WTC11 (cell line): ENCODE measurements at regions of chr5 and their contacts with region 1.

Region 1: GRCh38 chr5:178461004-178461730 is 129.0 kb downstream of the COL23A1 start:
- DNase-seq: peak; percentile 94
- ATAC-seq: peak; percentile 96
- H3K4me3 Mint-ChIP-seq: no peak overlapping the region
- H3K27ac Mint-ChIP-seq: no peak overlapping the region
- H3K4me1 Mint-ChIP-seq: peaks cover 33% of the 10 kb centered on the region
- H3K27me3 Mint-ChIP-seq: no peaks in the 10 kb centered on the region
- CTCF ChIP-seq: peak; percentile 92

Region 2: GRCh38 chr5:178271726-178272479 is 189.3 kb before region 1 on chr5:
- CTCF ChIA-PET with region 1: no interaction called
- POLR2A ChIA-PET with region 1: no interaction called
- DNase-seq: no peak
- ATAC-seq: no peak
- H3K4me3 Mint-ChIP-seq: no peak overlapping the region
- H3K27ac Mint-ChIP-seq: no peak overlapping the region
- H3K4me1 Mint-ChIP-seq: no peaks in the 10 kb centered on the region
- H3K27me3 Mint-ChIP-seq: peaks cover 4% of the 10 kb centered on the region
- CTCF ChIP-seq: no peak

Region 3: DNA sequence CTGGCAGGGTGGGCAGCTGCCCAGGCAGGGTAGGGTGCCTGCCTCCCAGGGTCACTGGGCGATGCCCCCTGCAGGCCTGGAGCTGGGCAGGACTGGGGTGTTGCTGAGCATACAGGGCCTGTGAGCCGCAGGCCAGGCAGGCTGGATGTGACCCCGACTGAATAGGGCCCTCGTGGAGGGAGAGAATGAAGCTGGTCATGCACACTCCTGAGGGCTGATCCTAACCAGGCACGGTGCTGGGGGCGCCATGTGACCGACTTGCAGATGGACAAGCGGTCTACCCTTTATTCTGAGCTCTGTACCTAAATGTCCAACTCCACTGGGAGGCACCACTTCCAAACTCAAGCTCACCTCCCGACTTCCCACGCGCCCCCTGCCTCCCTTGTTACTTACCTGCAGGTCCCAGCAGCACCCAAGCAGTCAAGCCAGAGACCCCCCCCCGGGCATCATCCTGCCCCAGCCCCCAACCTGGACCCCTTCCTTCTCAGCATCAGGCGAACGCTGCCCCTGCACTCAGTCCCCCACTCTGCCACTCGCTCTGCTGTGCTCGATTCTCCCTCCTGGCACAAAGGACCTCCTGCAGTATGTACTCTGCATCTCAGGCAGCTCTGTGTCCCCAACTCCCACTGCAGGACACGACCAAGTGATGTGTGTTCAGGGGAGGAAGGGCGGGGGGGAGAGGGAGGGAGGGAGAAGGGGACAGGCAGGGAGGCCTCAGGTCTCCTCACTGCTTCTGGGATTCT is 151.7 kb before region 1 on chr5:
- CTCF ChIA-PET with region 1: interaction called, 11 read pairs
- POLR2A ChIA-PET with region 1: no interaction called
- DNase-seq: peak; percentile 11
- ATAC-seq: no peak
- H3K4me3 Mint-ChIP-seq: no peak overlapping the region
- H3K27ac Mint-ChIP-seq: no peak overlapping the region; the same call in 1 of the 2 replicates
- H3K4me1 Mint-ChIP-seq: peaks cover 22% of the 10 kb centered on the region
- H3K27me3 Mint-ChIP-seq: no peaks in the 10 kb centered on the region; the same call in 1 of the 2 replicates
- CTCF ChIP-seq: no peak

Region 4: GRCh38 chr5:178404987-178405386 is 56.2 kb before region 1 on chr5:
- CTCF ChIA-PET with region 1: no interaction called
- POLR2A ChIA-PET with region 1: no interaction called
- DNase-seq: no peak
- ATAC-seq: no peak
- H3K4me3 Mint-ChIP-seq: no peak overlapping the region
- H3K27ac Mint-ChIP-seq: no peak overlapping the region
- H3K4me1 Mint-ChIP-seq: no peaks in the 10 kb centered on the region
- H3K27me3 Mint-ChIP-seq: no peaks in the 10 kb centered on the region
- CTCF ChIP-seq: no peak

Region 5: GRCh38 chr5:178428341-178428964 is 32.7 kb before region 1 on chr5:
- CTCF ChIA-PET with region 1: interaction called, 11 read pairs
- POLR2A ChIA-PET with region 1: no interaction called
- DNase-seq: no peak
- ATAC-seq: peak; percentile 23; the same call in 1 of the 2 replicates
- H3K4me3 Mint-ChIP-seq: no peak overlapping the region
- H3K27ac Mint-ChIP-seq: no peak overlapping the region
- H3K4me1 Mint-ChIP-seq: peaks cover 28% of the 10 kb centered on the region
- H3K27me3 Mint-ChIP-seq: no peaks in the 10 kb centered on the region
- CTCF ChIP-seq: no peak

Region 6: DNA sequence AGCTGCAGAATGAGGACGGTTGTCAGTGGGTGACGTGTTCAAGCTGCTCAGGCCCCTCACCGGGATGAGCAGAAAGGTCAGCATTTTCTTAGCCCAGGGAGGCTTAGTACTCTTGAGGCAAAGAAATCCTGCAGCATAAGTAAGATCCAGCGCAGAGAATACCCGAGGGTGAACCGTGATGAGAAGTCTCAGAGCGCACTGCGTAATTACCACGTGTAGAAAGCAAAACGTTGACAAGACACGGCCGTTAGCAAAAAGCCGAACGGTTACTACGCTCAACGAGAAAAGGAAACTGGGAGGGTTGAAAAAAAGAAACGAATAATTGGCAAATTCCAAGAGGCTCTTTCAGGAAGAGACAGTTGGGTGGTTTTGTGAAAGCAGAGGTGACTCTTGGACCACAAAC is 25.1 kb after region 1 on chr5:
- CTCF ChIA-PET with region 1: interaction called, 23 read pairs
- POLR2A ChIA-PET with region 1: no interaction called
- DNase-seq: no peak
- ATAC-seq: no peak
- H3K4me3 Mint-ChIP-seq: no peak overlapping the region
- H3K27ac Mint-ChIP-seq: peak overlapping the region; percentile 44
- H3K4me1 Mint-ChIP-seq: peaks cover 38% of the 10 kb centered on the region
- H3K27me3 Mint-ChIP-seq: peaks cover 3% of the 10 kb centered on the region; the same call in 1 of the 2 replicates
- CTCF ChIP-seq: no peak

Region 7: GRCh38 chr5:178542455-178542854 is 81.3 kb after region 1 on chr5:
- CTCF ChIA-PET with region 1: interaction called, 43 read pairs
- POLR2A ChIA-PET with region 1: no interaction called
- DNase-seq: no peak
- ATAC-seq: no peak
- H3K4me3 Mint-ChIP-seq: no peak overlapping the region
- H3K27ac Mint-ChIP-seq: peak overlapping the region; percentile 43
- H3K4me1 Mint-ChIP-seq: peaks cover 44% of the 10 kb centered on the region
- H3K27me3 Mint-ChIP-seq: no peaks in the 10 kb centered on the region
- CTCF ChIP-seq: no peak

Region 8: DNA sequence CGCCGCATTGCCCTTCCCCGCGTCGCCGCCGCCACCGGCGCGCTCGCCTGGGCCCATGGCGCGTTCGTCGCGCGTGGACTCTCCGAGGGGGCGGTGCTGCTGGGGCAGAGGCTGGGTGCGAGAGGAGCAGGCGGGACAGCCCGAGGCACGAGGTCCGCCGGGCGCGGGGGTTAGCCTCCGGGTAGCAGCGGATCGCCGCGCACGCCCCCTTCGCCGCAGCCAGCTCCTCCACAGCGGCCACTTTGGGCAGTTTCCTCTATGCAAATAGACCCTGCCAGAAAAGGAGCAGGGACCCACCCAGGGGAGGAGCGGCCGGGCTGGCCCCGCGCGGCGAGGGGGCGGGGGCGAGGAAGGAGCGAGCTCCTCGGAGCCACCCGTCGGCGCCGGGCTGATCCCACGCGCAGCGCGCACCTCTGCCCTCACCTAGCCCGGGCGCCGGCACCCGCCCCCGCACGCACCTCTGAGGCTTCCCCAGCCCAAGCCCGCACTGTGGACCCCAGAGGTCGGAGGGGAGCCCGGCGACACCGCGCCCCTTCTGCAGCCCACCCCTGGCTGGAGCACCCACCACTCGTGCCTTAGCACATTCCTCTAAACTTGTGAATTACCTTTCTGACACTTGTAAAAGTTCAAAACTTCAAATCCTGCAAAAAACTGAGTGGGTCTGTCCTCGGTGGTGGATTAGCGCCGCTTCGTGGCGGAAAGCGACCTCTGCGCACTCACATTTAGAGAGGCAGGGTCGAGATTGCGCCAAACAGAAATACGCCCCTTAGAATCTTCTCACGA is 129.2 kb after region 1 on chr5 and contains the start of gene COL23A1:
- CTCF ChIA-PET with region 1: interaction called, 88 read pairs
- POLR2A ChIA-PET with region 1: no interaction called
- DNase-seq: peak; percentile 70
- ATAC-seq: peak; percentile 65
- H3K4me3 Mint-ChIP-seq: peak within 1 kb of the TSS; percentile 79
- H3K27ac Mint-ChIP-seq: no peak within 1 kb of the TSS
- H3K4me1 Mint-ChIP-seq: peaks cover 37% of the 10 kb centered on the region
- H3K27me3 Mint-ChIP-seq: peaks cover 30% of the 10 kb centered on the region
- CTCF ChIP-seq: peak; percentile 57
- total RNA-seq, gene COL23A1: 15.0 to 19.8 TPM (median 18.7 TPM) in 3 replicates

Region 9: GRCh38 chr5:178606269-178606668 is 145.1 kb after region 1 on chr5:
- CTCF ChIA-PET with region 1: no interaction called
- POLR2A ChIA-PET with region 1: no interaction called
- DNase-seq: no peak
- ATAC-seq: no peak
- H3K4me3 Mint-ChIP-seq: no peak overlapping the region
- H3K27ac Mint-ChIP-seq: no peak overlapping the region
- H3K4me1 Mint-ChIP-seq: no peaks in the 10 kb centered on the region
- H3K27me3 Mint-ChIP-seq: no peaks in the 10 kb centered on the region
- CTCF ChIP-seq: no peak

Region 10: GRCh38 chr5:178690208-178690607 is 229.0 kb after region 1 on chr5:
- CTCF ChIA-PET with region 1: no interaction called
- POLR2A ChIA-PET with region 1: no interaction called
- DNase-seq: no peak
- ATAC-seq: no peak
- H3K4me3 Mint-ChIP-seq: no peak overlapping the region
- H3K27ac Mint-ChIP-seq: no peak overlapping the region
- H3K4me1 Mint-ChIP-seq: no peaks in the 10 kb centered on the region
- H3K27me3 Mint-ChIP-seq: no peaks in the 10 kb centered on the region; the same call in 1 of the 2 replicates
- CTCF ChIP-seq: no peak